Mucosa of descending colon (tissue), 3 donors: ENCODE measurements at regions of chr7 and their contacts with region 1.

Region 1: GRCh38 chr7:135169141-135169960 is 1.2 kb downstream of the CYREN start:
- DNase-seq: peak; percentile 58 to 72 (median 68)
- ATAC-seq: peak; percentile 33
- H3K4me3 ChIP-seq: peak overlapping the region; percentile 93
- H3K4me1 ChIP-seq: peaks cover 16% of the 10 kb centered on the region
- CTCF ChIP-seq: no peak

Region 2: DNA sequence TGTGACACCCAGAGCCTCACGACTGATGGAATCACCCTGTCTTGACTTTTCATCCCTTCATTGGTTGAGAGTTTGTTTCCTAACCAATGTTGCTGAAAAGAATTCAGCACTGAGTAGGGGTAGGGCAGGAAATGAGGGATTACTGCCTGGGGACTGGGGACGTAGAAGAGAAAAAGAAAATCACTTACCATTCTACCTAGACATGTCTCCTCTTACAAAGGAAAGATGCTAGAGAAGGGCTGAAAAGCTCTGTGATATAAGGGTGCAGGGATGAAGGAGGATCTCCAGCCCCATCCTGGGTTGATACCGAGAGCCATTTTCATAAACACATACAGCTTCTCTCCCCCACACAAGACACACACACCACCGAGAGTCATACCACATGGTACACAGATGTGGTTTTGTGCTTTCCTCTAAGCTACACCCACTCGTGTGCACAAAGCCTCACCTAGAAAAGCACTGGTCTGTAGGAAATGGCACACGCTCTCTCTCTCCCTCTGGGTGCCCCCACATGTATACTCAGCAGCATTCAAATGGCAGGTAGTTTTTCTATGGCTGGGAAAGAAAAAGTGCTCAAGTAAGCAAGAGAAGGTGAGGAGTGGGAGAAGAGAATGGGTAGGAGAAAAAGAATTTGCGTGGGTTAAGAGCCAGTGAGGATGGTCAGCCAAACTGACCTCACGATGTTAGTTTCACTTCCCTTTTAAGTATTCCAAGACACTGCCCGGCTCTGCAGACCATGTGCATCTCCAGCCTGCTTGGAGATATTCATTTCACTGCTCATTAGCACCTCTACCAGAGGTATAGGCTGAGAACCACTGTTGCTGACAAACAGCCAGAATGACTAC is 304.1 kb before region 1 on chr7:
- intact Hi-C with region 1: no loop called
- DNase-seq: no peak
- ATAC-seq: peak; percentile 43
- H3K4me3 ChIP-seq: no peak overlapping the region
- H3K4me1 ChIP-seq: no peaks in the 10 kb centered on the region
- CTCF ChIP-seq: no peak

Region 3: GRCh38 chr7:134962270-134962780 is 207.0 kb before region 1 on chr7:
- intact Hi-C with region 1: loop called in 1 of 2 experiments (anchors 10 kb)
- DNase-seq: no peak
- ATAC-seq: no peak
- H3K4me3 ChIP-seq: no peak overlapping the region
- H3K4me1 ChIP-seq: no peaks in the 10 kb centered on the region
- CTCF ChIP-seq: no peak